ENCODE measurements at regions of chr17 and their contacts with region 1.

Region 1: GRCh38 chr17:36148559-36149295 is 27.7 kb downstream of the TBC1D3B start:
- DNase-seq: peak; percentile 57 to 92
- ATAC-seq: peak; percentile 91 to 97
- H3K4me3 ChIP-seq: no peak overlapping the region
- H3K27ac ChIP-seq: no peak overlapping the region
- H3K4me1 ChIP-seq: no peaks in the 10 kb centered on the region
- CTCF ChIP-seq: peak; percentile 98
- EP300 ChIP-seq: no peak
- POLR2A ChIP-seq: no peak
- RAD21 ChIP-seq: peak; percentile 90 to 97

Region 2: DNA sequence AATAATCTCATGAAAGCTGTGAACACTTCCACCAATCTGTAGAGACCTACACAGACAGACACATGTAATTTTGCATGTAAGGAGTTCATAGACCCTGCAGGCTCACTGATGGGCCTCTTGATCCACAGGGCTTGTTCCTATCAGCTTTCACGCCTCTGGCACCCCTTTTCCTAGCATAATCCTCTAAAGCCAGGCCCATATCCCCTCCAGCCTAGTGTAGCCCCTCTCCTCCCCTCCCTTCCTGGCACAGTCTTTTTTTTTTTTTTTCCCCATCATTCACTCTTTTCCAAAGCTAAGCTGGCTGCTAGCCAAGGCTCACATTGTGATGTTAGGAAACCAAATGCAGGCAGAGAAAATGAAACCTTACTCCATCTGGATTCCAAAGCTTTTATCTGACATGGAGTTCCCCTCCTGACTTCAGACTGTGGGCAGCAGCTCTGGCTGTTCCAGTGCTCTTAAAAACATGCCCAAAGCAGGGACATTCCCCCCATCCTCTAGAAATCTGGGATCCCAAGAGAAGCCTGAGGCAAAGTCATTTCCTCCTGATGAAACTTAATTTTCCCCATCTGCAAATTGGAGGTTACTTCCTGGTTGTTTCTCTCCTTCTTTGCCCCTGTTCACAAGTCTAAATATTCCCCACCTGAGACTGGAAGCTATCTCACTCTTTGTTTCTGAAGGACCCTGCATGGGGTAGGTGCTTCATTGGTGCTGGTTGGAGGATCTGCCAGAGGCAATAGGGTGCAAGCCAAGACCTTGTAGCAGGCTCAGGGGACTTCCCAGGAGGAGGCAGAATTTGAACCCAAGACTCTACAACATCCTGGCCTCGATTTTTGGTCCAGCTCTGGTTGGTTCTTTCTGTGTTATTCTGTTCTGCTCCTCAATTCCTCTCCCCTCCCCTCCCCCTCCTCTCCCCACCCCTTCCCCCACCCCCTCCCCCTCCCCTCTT is 258.6 kb before region 1 on chr17:
- CTCF ChIA-PET with region 1: no interaction called
- POLR2A ChIA-PET with region 1: no interaction called
- DNase-seq: peak in 1 of 2 experiments; percentile 13
- ATAC-seq: peak in 1 of 2 experiments; percentile 41; a peak in 3 of 6 replicates
- H3K4me3 ChIP-seq: no peak overlapping the region
- H3K27ac ChIP-seq: peak overlapping the region in 1 of 2 experiments; percentile 65; a peak in 4 of 6 replicates
- H3K4me1 ChIP-seq: peaks cover 15% of the 10 kb centered on the region
- CTCF ChIP-seq: no peak
- EP300 ChIP-seq: no peak
- POLR2A ChIP-seq: no peak
- RAD21 ChIP-seq: no peak

Region 3: DNA sequence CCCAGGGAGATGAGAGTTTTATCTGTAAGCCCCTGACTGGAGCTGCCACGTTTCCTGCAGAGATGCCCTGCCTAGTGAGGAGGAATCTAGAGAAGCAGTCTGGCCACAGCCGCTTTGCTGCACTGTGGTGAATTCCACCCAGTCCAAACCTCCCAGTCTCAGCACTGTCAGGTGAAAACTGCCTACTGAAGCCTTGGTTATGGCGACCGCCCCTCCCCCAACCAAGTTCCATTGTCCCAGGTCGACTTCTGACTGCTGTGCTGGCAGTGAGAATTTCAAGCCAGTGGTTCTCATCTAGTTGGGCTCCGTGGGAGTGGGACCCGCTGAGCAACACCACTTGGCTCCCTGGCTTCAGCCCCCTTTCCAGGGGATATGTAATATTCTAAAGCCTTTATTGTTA is 195.0 kb before region 1 on chr17:
- CTCF ChIA-PET with region 1: interaction called, 14 read pairs
- POLR2A ChIA-PET with region 1: no interaction called
- DNase-seq: no peak
- ATAC-seq: no peak
- H3K4me3 ChIP-seq: no peak overlapping the region
- H3K27ac ChIP-seq: no peak overlapping the region
- H3K4me1 ChIP-seq: no peaks in the 10 kb centered on the region
- CTCF ChIP-seq: no peak
- EP300 ChIP-seq: no peak
- POLR2A ChIP-seq: no peak
- RAD21 ChIP-seq: no peak

Region 4: GRCh38 chr17:35981908-35982330 is 166.8 kb before region 1 on chr17:
- CTCF ChIA-PET with region 1: interaction called, 271 read pairs
- POLR2A ChIA-PET with region 1: no interaction called
- DNase-seq: no peak
- ATAC-seq: peak in 1 of 2 experiments; percentile 54; a peak in 2 of 6 replicates
- H3K4me3 ChIP-seq: no peak overlapping the region
- H3K27ac ChIP-seq: no peak overlapping the region
- H3K4me1 ChIP-seq: no peaks in the 10 kb centered on the region
- CTCF ChIP-seq: no peak
- EP300 ChIP-seq: no peak
- POLR2A ChIP-seq: no peak
- RAD21 ChIP-seq: peak in 1 of 2 experiments; percentile 29; a peak in 2 of 5 replicates

Region 5: DNA sequence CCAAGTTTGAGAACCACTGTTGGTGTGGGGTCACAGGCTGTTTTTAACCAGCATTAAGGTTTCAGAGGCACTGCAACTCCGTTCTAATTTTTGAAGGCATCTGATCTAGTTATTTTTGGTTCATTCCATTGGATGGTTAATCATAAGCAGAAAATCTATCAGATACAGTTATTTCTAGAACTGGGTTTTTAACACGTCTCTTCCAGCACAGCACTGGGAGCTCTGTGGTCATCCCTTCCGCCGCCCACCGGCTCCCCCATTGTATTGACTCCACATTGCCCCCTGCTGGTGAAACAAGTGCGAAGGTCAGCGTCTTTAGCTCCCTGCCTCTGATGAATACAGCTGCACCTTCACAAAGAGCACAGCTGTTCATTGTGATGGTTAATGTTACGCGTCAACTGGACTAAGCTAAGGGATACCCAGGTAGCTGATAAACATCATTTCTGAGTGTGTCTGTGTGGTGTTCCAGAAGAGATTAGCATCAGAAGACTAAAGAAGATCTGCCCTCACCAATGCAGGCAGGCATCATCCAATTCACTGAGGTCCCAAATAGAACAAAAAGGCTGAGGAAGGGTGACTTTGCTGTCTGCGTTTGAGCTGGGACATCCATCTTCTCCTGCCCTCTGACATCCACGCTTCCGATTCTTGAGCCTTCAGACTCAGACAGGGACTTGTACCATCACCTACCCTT is 76.2 kb before region 1 on chr17:
- CTCF ChIA-PET with region 1: interaction called, 12 read pairs
- POLR2A ChIA-PET with region 1: no interaction called
- DNase-seq: peak; percentile 52 to 70
- ATAC-seq: peak; percentile 73 to 93
- H3K4me3 ChIP-seq: no peak overlapping the region
- H3K27ac ChIP-seq: no peak overlapping the region
- H3K4me1 ChIP-seq: no peaks in the 10 kb centered on the region
- CTCF ChIP-seq: peak; percentile 70
- EP300 ChIP-seq: no peak
- POLR2A ChIP-seq: no peak
- RAD21 ChIP-seq: peak; percentile 34 to 51; a peak in 2 of 5 replicates

Region 6: GRCh38 chr17:36124879-36125824 is 23.6 kb before region 1 on chr17:
- CTCF ChIA-PET with region 1: interaction called, 83 read pairs
- POLR2A ChIA-PET with region 1: no interaction called
- DNase-seq: peak in 1 of 2 experiments; percentile 22
- ATAC-seq: 0 out of 6 replicates have a peak, but pooled peaks of 1 of the 2 experiments have one; percentile 31
- H3K4me3 ChIP-seq: no peak overlapping the region
- H3K27ac ChIP-seq: no peak overlapping the region
- H3K4me1 ChIP-seq: no peaks in the 10 kb centered on the region
- CTCF ChIP-seq: no peak
- EP300 ChIP-seq: no peak
- POLR2A ChIP-seq: no peak
- RAD21 ChIP-seq: no peak

Region 7: DNA sequence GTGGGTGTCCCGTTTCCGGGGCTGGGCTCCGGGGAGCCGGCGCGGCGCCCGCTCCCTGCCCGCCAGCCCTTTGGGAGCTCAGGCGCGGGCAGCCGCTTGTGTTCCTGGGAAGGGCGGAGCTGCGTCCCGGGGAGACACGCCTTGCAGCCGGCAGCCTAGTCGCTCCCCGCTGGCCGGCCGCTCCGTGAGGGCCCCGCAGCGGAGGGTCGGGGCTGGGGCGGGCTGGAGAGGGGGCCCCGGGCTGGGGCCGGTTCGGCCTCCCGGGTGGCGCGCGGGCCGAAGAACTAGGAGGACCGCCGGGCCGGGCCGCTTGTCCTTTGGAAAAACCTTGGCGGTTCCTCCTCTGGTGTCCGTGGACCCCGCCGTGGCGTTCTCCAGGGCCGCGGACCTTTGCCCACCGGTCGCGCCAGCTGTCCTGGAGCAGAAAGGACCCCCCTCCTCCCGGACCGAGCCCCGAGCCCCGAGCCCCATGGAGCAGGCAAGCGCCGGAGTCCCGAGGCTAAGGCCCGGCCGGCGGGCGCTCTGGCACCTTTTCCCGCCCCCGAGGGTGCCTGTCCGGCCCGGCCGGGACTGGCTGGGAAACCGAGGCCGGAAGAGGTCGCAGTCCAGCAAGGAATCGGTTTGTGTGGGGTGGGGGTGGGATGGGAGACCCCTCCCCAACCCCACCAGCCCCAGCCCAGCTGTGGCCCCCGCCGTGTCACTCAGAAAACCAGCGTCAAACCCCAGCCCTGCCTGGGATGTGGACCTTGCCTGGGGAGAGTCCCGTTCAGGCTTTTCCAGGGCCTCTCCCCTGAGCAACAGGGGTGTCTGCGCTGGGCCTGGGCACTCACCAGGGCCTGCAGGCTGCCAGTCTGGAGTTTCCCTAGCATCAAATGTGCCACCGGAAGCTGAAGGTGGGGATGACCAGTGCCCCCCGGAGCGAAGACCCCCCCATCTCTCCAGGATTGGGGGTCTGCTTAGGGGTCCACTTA is 34.6 kb after region 1 on chr17:
- CTCF ChIA-PET with region 1: interaction called, 10 read pairs
- POLR2A ChIA-PET with region 1: no interaction called
- DNase-seq: peak; percentile 55 to 68
- ATAC-seq: peak; percentile 86 to 95
- H3K4me3 ChIP-seq: peak overlapping the region; percentile 62
- H3K27ac ChIP-seq: peak overlapping the region; percentile 70 to 91
- H3K4me1 ChIP-seq: 0 out of 3 replicates have a peak, but pooled peaks cover 6% of the 10 kb centered on the region
- CTCF ChIP-seq: no peak
- EP300 ChIP-seq: no peak
- POLR2A ChIP-seq: peak; percentile 39
- RAD21 ChIP-seq: peak in 1 of 2 experiments; percentile 9; a peak in 1 of 5 replicates

Measured in A549 (cell line).